ENCODE measurements at regions of chr3 and their contacts with region 1.

Region 1: DNA sequence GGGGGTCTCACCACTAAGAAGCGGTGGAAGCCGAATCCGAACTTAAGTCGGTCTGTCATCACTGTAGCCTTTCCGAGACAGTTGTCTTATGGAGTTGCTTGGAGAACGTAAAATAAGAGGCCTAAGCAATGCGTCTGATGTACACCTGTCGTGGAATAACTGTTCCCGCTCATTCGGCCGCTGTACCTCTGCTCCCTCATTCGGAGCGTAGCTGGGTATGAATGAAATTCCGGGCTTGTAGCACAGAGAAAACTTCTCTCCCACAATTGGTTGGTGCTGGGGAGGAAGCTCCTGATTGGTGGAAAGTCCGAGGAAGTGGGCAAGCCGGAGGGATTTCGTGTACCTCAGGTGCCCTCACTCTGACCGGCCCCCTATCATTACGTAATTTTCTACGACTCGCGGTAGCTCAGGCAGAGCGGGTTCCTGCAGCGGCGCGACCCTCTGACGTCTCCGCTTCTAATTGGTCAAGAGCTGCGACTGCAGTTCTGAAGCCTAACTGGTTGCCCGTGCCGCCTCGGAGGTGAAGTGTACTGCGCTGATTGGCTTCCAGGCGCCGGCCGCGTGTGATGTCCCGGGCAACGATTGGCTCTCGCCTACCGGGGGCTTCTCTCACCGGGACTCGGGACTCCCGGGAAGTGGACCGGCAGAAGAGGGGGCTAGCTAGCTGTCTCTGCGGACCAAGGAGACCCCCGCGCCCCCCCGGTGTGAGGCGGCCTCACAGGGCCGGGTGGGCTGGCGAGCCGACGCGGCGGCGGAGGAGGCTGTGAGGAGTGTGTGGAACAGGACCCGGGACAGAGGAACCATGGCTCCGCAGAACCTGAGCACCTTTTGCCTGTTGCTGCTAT is at the start of gene DNAJB11:
- DNase-seq: peak; percentile 91
- ATAC-seq: peak; percentile 82
- H3K4me3 Mint-ChIP-seq: peak within 1 kb of the TSS; percentile 94
- H3K27ac Mint-ChIP-seq: peak within 1 kb of the TSS; percentile 97
- H3K4me1 Mint-ChIP-seq: peaks cover 56% of the 10 kb centered on the region
- H3K27me3 Mint-ChIP-seq: no peaks in the 10 kb centered on the region
- CTCF ChIP-seq: no peak
- total RNA-seq, gene DNAJB11: 51.3 and 52.5 TPM in 2 replicates

Region 2: GRCh38 chr3:185937689-185938463 is 632.4 kb before region 1 on chr3 and contains the start of gene TRA2B:
- CTCF ChIA-PET with region 1: interaction called, 3 read pairs
- POLR2A ChIA-PET with region 1: interaction called, 66 read pairs
- intact Hi-C with region 1: loop called (anchors 1 kb)
- DNase-seq: peak; percentile 96
- ATAC-seq: peak; percentile 87
- H3K4me3 Mint-ChIP-seq: peak within 1 kb of the TSS; percentile 99
- H3K27ac Mint-ChIP-seq: peak within 1 kb of the TSS; percentile 100
- H3K4me1 Mint-ChIP-seq: peaks cover 45% of the 10 kb centered on the region
- H3K27me3 Mint-ChIP-seq: no peaks in the 10 kb centered on the region
- CTCF ChIP-seq: no peak
- total RNA-seq, gene TRA2B: 213 and 219 TPM in 2 replicates

Region 3: DNA sequence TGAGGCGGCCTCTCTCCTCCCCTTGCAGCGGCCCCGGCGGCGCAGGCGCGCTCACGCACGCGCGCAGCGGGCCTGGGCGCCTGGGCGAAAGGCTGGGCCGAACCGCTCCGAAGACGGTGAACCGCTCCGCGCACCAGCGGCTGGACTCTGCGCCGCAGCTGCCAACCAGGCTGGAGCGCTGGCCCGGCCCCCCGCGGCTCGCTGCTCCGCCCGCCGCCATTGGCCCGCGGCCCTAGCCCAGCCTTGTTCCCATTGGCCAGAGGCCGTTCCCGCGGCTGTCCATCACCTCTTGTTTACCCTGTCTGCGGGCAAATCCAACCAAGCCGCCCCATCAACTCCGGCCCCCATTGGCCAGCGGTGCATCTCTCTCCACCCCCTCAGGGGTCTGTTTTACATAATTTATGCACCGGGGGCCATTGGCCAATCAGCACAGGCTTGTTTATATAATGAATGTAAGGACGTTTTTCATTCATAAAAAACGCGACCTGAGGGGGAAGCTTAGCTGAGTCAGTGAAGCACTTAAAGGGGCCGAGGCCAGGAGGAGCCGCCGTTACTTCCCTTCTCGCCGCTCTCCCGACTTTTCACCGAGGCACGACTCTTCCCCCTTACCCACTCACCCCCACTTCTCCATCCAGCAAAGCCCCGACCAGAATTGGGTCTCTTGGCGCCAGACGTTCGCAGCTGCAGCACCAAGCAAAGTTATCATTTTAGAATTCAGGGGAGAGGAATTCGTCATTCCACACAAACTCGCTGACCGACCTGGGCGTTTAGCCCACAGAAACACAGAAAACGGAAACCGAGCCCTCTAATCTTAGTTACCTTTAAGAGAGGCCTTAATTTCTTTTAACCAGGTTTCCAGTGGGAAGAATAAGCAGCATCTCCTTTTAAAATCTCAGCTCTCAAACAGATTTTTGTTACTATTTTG is 461.1 kb before region 1 on chr3 and contains the start of gene ETV5:
- CTCF ChIA-PET with region 1: no interaction called
- POLR2A ChIA-PET with region 1: interaction called, 5 read pairs
- intact Hi-C with region 1: loop called (anchors 1 kb)
- DNase-seq: peak; percentile 85
- ATAC-seq: peak; percentile 95
- H3K4me3 Mint-ChIP-seq: peak within 1 kb of the TSS; percentile 95
- H3K27ac Mint-ChIP-seq: peak within 1 kb of the TSS; percentile 80
- H3K4me1 Mint-ChIP-seq: peaks cover 35% of the 10 kb centered on the region
- H3K27me3 Mint-ChIP-seq: peaks cover 42% of the 10 kb centered on the region
- CTCF ChIP-seq: no peak
- total RNA-seq, gene ETV5: 0.49 and 0.89 TPM in 2 replicates

Region 4: DNA sequence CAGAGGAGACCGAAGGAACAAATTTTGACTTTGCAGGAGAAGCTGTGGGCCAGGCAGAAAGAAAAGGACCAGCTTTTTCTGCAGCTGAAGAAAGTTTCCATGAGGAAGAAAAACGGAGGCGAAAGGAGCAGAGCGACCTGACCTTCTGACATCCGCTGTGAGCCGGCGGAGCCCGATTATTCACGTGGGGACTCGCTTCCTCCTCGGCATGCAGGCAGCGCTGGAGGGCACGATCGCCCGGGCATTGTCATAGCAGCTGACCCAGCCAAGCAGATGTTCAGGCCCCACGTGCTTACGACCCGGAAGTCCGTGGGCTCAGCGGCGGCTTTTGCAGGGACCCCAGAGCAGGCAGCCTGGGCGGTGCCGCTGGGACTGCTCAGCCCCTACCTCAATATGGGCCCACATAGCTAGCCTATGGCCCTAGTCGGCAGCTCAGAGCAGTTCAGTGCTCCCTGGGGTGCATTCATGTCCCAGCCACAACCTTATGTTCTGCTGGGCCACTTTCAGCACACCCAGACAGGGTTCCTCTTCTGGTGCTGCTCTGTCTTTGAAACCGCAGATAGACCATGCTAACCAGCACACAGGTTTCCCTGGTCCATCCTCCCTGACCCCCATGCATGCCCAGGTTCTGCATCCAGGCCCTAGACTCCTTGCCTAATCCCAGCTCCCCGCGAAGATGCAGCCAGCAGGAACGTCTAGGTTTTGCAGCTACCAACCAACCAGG is 202.5 kb after region 1 on chr3:
- CTCF ChIA-PET with region 1: no interaction called
- POLR2A ChIA-PET with region 1: interaction called, 14 read pairs
- intact Hi-C with region 1: no loop called
- DNase-seq: peak; percentile 67
- ATAC-seq: peak; percentile 94
- H3K4me3 Mint-ChIP-seq: peak overlapping the region; percentile 96
- H3K27ac Mint-ChIP-seq: peak overlapping the region; percentile 96
- H3K4me1 Mint-ChIP-seq: peaks cover 23% of the 10 kb centered on the region
- H3K27me3 Mint-ChIP-seq: no peaks in the 10 kb centered on the region
- CTCF ChIP-seq: no peak

Region 5: DNA sequence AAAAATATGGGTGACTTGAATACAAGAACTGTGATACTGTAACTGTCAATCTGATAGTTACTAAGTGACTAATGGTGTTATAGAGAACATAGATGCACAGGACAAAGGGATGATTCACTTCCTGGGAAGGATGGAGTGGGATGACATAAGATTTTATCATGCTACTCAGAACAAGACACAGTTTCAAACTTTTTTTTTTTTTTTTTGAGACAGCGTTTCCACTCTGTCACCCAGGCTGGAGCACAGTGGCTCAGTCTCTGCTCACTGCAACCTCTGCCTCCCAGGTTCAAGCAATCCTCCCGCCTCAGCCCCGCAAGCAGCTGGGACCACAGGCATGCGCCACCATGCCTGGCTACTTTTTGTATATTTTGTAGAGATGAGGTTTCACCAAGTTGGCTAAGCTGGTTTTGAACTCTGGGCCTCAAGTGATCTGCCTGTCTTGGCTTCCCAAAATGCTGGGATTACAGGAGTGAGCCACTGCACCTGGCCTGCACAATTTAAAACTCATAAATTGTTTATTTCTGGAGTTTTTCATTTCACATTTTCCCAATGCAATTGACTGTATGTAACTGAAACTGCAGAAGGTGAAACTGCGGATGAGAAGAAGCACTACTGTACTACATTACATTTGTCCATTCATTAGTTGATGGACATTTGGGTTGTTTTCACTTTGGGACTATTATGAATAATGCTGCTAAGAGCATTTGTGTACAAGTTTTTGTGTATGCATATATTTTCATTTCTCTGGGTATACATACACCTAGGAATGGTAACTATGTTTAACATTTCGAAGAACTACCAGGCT is 312.8 kb after region 1 on chr3:
- CTCF ChIA-PET with region 1: no interaction called
- POLR2A ChIA-PET with region 1: no interaction called
- intact Hi-C with region 1: no loop called
- DNase-seq: no peak
- ATAC-seq: no peak
- H3K4me3 Mint-ChIP-seq: no peak overlapping the region
- H3K27ac Mint-ChIP-seq: no peak overlapping the region
- H3K4me1 Mint-ChIP-seq: peaks cover 3% of the 10 kb centered on the region
- H3K27me3 Mint-ChIP-seq: peaks cover 5% of the 10 kb centered on the region
- CTCF ChIP-seq: no peak

Region 6: DNA sequence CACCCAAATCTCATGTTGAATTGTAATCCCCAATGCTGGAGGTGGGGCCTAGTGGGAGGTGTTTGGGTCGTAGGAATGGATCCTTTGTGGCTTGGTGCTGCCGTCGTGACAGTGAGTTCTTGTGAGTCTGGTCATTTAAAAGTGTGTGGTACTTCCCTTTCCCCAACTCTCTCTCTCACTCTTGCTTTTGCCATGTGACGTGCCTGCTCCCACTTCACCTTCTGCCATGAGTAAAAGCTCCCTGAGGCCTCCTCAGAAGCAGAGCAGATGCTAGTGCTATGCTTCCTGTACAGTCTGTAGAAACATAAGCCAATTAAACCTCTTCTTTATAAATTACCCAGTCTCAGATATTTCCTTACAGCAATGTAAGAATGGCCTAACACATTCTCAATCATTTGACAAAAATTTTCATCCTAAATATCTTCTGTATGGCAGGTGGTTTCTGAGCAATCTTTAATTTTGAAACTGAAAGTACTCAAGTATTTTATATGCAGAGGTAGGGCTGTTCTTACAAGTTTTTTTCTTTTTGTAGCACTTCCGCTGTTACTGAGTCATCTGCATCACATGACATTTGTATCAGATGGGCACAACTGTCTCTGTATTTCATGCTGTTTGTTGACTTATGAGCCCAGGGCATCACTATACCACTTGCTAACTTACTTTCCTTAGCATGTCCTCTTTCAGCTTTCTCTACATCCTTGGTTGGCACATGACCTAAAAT is 560.2 kb after region 1 on chr3:
- CTCF ChIA-PET with region 1: no interaction called
- POLR2A ChIA-PET with region 1: interaction called, 6 read pairs
- intact Hi-C with region 1: loop called (anchors 1 kb)
- DNase-seq: no peak
- ATAC-seq: peak; percentile 90
- H3K4me3 Mint-ChIP-seq: peak overlapping the region; percentile 76
- H3K27ac Mint-ChIP-seq: peak overlapping the region; percentile 96
- H3K4me1 Mint-ChIP-seq: peaks cover 46% of the 10 kb centered on the region
- H3K27me3 Mint-ChIP-seq: no peaks in the 10 kb centered on the region
- CTCF ChIP-seq: no peak

Measured in activated B cell treated with CpG ODN at 0.5 μM for 24 hours (primary cell).